ENCODE measurements at regions of chr6 and their contacts with region 1.

Region 1: DNA sequence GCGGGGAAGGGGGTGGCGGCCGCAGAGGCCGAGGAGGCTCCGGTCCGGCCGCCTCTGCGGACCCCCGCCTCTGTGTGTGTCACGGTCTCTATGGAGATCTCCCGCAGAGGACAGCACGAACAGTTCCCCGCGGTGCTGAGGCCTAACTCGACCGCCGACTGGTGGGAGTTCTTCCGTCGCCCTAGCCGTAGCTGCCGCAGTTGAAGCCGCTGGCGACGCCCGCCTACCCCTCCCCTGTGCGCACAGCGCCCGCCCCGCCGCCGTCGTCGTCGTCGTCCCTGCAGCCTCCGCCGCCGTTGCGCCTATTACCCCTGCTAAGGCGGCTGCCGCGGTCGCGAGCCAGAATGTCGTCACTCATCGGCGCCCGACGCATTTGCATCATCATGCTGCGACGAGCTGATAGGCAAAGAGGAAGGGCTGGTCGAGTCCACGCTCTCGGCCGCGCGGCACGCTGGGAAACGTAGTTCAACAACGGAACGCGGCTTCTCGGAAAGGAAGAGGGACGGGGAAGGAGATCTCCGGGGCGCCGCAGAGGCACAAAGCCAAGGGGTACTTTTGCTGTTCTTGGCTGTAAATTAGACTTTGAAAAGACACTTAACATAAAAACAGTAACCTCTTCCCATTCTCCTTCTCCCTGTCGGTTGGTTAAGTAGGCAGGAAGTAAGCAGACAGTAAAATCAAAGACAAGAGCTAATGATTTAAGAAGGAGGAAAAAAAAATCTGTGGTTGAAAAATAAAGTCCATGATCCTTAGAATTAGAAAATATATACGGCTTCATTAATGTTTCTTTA is at the start of gene NUP153:
- DNase-seq: peak; percentile 99
- ATAC-seq: peak; percentile 72
- H3K4me3 Mint-ChIP-seq: peak within 1 kb of the TSS; percentile 80
- H3K27ac Mint-ChIP-seq: peak within 1 kb of the TSS; percentile 90
- H3K4me1 Mint-ChIP-seq: peaks cover 30% of the 10 kb centered on the region
- H3K27me3 Mint-ChIP-seq: no peaks in the 10 kb centered on the region
- total RNA-seq, gene NUP153: 83.8 to 97.9 TPM

Region 2: DNA sequence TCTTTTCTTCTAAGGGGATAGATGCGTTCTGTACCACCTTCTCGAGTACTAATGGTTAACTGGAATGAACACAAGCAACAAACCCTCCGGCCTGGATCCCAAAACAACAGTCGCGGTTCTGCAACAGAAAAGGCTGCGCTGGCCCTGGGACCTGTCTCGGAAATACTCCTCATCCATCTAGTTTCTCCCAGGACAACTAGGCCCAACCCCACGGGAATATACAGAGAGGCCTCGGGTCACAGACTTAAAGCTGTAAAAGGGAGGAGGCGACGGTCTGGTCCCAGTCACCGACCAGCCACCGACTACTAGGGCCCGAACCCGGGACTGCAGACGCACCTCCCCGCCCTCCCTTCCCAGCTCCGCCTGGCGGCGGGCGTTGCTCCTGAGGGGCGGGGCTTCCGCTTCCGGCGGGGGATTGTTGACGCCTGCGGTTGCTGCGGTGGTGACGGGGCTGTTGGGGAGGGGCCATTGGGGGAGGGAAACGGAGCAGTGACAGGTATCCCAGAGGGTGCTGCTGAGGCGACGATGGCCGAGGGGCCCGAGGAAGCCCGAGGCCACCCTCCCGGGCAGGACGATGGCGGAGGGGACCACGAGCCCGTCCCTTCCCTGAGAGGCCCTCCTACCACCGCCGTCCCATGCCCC is 106.8 kb before region 1 on chr6 and contains the start of gene FAM8A1:
- CTCF ChIA-PET with region 1: interaction called, 19 read pairs
- DNase-seq: peak; percentile 97
- ATAC-seq: peak; percentile 89
- H3K4me3 Mint-ChIP-seq: peak within 1 kb of the TSS; percentile 81
- H3K27ac Mint-ChIP-seq: peak within 1 kb of the TSS; percentile 86
- H3K4me1 Mint-ChIP-seq: peaks cover 33% of the 10 kb centered on the region
- H3K27me3 Mint-ChIP-seq: no peaks in the 10 kb centered on the region
- total RNA-seq, gene FAM8A1: 7.0 to 9.0 TPM